ENCODE measurements at regions of chr13 and their contacts with region 1.

Region 1: GRCh38 chr13:84137292-84137691 is 255.0 kb upstream of the SLITRK1 start:
- DNase-seq: peak; percentile 69
- H3K4me3 Mint-ChIP-seq: no peak overlapping the region
- H3K27ac Mint-ChIP-seq: peak overlapping the region; percentile 46
- H3K4me1 Mint-ChIP-seq: peaks cover 15% of the 10 kb centered on the region
- H3K27me3 Mint-ChIP-seq: no peaks in the 10 kb centered on the region

Region 2: GRCh38 chr13:83876546-83876945 is 260.7 kb before region 1 on chr13:
- CTCF ChIA-PET with region 1: no interaction called
- intact Hi-C with region 1: loop called (anchors 2 kb)
- DNase-seq: no peak
- H3K4me3 Mint-ChIP-seq: no peak overlapping the region
- H3K27ac Mint-ChIP-seq: no peak overlapping the region
- H3K4me1 Mint-ChIP-seq: peaks cover 12% of the 10 kb centered on the region
- H3K27me3 Mint-ChIP-seq: peaks cover 37% of the 10 kb centered on the region

Region 3: DNA sequence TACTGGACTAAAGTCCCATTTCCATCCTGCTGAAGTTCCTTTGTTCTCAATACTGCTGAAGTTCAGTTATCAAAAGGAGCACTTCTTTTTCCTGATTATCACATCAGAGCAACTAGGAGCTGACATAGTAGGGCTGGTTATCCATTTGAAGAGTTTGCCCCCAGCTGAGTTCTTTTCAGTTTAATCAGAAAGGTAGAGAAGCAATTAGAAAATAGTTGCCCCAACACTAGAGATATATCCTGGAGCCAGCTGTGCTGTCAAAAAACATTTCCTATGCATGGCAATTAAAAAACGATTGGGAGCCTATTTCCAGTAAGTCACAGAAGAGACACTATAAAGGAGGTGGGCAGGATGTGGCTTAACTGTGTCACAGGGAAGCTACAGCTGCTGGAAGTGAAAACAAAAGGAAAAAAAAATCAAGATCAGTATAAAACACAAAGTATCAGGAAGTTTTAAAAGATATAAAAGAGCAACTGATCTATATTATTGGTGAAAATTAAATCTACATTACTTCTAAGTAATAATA is 99.3 kb before region 1 on chr13:
- CTCF ChIA-PET with region 1: no interaction called
- intact Hi-C with region 1: loop called (anchors 1 kb)
- DNase-seq: peak; percentile 4
- H3K4me3 Mint-ChIP-seq: no peak overlapping the region
- H3K27ac Mint-ChIP-seq: no peak overlapping the region
- H3K4me1 Mint-ChIP-seq: peaks cover 18% of the 10 kb centered on the region
- H3K27me3 Mint-ChIP-seq: no peaks in the 10 kb centered on the region